Activated B cell treated with CpG ODN at 0.5 μM for 24 hours (primary cell): ENCODE measurements at regions of chr10 and their contacts with region 1.

Region 1: DNA sequence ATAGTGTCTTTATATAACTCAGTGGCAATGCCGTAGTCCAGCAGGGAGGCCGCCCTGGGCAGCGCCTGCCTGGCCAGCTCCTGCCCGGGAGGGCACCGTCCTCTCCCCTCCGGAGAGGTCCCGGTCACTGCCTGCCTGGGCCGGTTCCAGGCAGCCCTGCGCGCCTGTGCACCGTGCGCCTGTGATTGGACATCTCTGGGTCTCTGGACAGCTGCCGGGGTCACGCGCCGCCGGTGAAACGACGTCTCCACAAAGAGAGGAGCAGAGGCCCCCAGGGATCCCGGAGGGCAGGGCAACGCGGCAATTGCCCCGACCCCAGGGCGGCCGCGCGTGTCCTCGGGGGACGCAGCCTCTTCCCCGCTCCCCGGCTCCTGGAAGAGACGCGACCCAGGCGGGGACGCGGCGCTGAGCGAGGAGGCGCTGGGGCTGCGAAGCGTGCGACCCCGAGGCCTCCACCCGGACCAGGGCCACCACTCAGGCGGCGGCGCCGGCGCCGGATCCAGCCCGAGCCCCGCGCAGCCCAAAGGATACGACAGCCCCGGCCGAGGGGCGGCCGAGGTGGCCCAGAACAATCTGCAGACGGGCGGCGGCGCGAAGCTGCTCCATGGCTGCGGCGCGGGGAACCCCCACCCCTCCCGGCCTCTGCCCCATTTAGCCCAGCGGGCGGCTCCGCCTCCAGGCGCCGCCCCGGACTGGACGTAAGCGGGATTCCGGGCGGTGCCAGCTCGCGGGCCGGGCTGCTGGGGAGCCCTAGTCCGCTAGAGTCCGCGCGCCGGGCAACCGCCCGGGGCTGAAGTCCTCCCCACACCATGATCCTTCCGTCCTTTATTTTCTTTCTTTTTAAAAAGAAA is at the start of gene PHYH:
- DNase-seq: peak; percentile 83
- ATAC-seq: peak; percentile 69
- H3K4me3 Mint-ChIP-seq: peak within 1 kb of the TSS; percentile 87
- H3K27ac Mint-ChIP-seq: peak within 1 kb of the TSS; percentile 82
- H3K4me1 Mint-ChIP-seq: peaks cover 27% of the 10 kb centered on the region
- H3K27me3 Mint-ChIP-seq: no peaks in the 10 kb centered on the region
- CTCF ChIP-seq: no peak
- total RNA-seq, gene PHYH: 10.4 and 10.8 TPM in 2 replicates

Region 2: GRCh38 chr10:12241810-12242529 is 1057.7 kb before region 1 on chr10:
- CTCF ChIA-PET with region 1: no interaction called
- POLR2A ChIA-PET with region 1: no interaction called
- intact Hi-C with region 1: loop called (anchors 5 kb)
- DNase-seq: no peak
- ATAC-seq: no peak
- H3K4me3 Mint-ChIP-seq: peak overlapping the region; percentile 29
- H3K27ac Mint-ChIP-seq: peak overlapping the region; percentile 75
- H3K4me1 Mint-ChIP-seq: peaks cover 69% of the 10 kb centered on the region
- H3K27me3 Mint-ChIP-seq: no peaks in the 10 kb centered on the region
- CTCF ChIP-seq: no peak

Region 3: GRCh38 chr10:13160934-13161856 is 138.5 kb before region 1 on chr10 and contains the start of gene MCM10:
- CTCF ChIA-PET with region 1: interaction called, 32 read pairs
- POLR2A ChIA-PET with region 1: interaction called, 15 read pairs
- intact Hi-C with region 1: loop called (anchors 1 kb)
- DNase-seq: peak; percentile 88
- ATAC-seq: peak; percentile 100
- H3K4me3 Mint-ChIP-seq: peak within 1 kb of the TSS; percentile 89
- H3K27ac Mint-ChIP-seq: peak within 1 kb of the TSS; percentile 43
- H3K4me1 Mint-ChIP-seq: peaks cover 14% of the 10 kb centered on the region
- H3K27me3 Mint-ChIP-seq: no peaks in the 10 kb centered on the region
- CTCF ChIP-seq: peak; percentile 77
- total RNA-seq, gene MCM10: 3.7 and 4.6 TPM in 2 replicates

Region 4: GRCh38 chr10:13271552-13272163 is 28.0 kb before region 1 on chr10:
- CTCF ChIA-PET with region 1: interaction called, 6 read pairs
- POLR2A ChIA-PET with region 1: interaction called, 3 read pairs
- intact Hi-C with region 1: loop called (anchors 1 kb)
- DNase-seq: peak; percentile 28
- ATAC-seq: peak; percentile 65
- H3K4me3 Mint-ChIP-seq: peak overlapping the region; percentile 42
- H3K27ac Mint-ChIP-seq: peak overlapping the region; percentile 27
- H3K4me1 Mint-ChIP-seq: no peaks in the 10 kb centered on the region
- H3K27me3 Mint-ChIP-seq: no peaks in the 10 kb centered on the region
- CTCF ChIP-seq: no peak

Region 5: DNA sequence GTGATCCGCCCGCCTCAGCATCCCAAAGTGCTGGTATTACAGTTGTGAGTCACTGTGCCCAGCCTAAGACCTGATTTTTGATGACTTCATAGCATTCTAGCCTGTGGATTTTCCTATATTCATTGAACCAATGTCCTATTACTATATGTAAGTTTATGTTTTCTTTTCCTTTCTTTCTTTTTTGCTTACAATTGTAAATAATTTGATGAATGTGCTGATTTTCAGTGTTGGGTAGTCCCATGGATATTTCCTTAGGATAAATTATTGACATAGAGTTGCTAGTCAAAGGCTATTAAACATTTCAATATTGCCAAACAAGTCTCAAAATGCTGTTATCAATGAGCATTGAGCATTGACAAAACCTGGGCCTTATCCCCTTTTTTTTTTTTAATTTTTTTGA is 10.1 kb after region 1 on chr10:
- CTCF ChIA-PET with region 1: no interaction called
- POLR2A ChIA-PET with region 1: no interaction called
- intact Hi-C with region 1: no loop called
- DNase-seq: no peak
- ATAC-seq: no peak
- H3K4me3 Mint-ChIP-seq: no peak overlapping the region
- H3K27ac Mint-ChIP-seq: no peak overlapping the region
- H3K4me1 Mint-ChIP-seq: no peaks in the 10 kb centered on the region
- H3K27me3 Mint-ChIP-seq: no peaks in the 10 kb centered on the region
- CTCF ChIP-seq: no peak

Region 6: GRCh38 chr10:13390604-13391522 is 91.2 kb after region 1 on chr10:
- CTCF ChIA-PET with region 1: no interaction called
- POLR2A ChIA-PET with region 1: no interaction called
- intact Hi-C with region 1: no loop called
- DNase-seq: no peak
- ATAC-seq: peak; percentile 45
- H3K4me3 Mint-ChIP-seq: peak overlapping the region; percentile 70
- H3K27ac Mint-ChIP-seq: no peak overlapping the region
- H3K4me1 Mint-ChIP-seq: peaks cover 14% of the 10 kb centered on the region
- H3K27me3 Mint-ChIP-seq: peaks cover 13% of the 10 kb centered on the region
- CTCF ChIP-seq: no peak

Region 7: DNA sequence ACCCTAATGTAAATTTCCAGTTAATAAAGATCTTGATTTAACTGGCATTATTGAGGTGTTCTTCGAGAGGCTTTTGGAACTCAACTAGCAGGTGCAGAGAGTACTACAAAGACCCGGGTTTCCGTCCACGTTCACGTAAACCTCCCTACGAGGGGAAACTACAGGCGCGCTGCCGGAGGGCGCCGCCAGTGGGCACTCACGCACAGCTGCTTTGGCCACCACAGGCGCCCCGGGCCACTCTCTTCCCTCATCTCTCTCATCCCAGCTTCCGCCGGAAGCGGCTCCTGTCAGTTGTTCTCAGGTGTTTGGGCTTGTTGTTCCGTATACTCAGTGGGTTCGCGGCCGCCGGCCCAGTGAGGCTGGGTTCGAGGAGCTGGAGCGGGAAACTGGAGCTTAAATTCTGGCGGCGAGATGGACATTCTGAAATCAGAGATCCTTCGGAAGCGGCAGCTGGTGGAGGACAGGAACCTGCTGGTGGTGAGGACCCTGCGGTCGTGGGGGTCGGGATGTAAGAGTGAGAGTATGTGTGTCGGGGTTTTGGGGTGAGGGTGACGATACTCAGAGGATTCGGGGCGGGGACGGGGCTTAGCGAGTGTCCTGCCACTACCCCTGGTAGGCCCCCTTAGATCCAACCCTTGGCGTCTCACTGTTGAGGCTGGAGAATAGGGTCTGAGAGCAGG is 287.2 kb after region 1 on chr10 and contains the start of gene PRPF18:
- CTCF ChIA-PET with region 1: no interaction called
- POLR2A ChIA-PET with region 1: interaction called, 4 read pairs
- intact Hi-C with region 1: loop called (anchors 5 kb)
- DNase-seq: peak; percentile 93
- ATAC-seq: peak; percentile 100
- H3K4me3 Mint-ChIP-seq: peak within 1 kb of the TSS; percentile 100
- H3K27ac Mint-ChIP-seq: peak within 1 kb of the TSS; percentile 98
- H3K4me1 Mint-ChIP-seq: peaks cover 29% of the 10 kb centered on the region
- H3K27me3 Mint-ChIP-seq: peaks cover 19% of the 10 kb centered on the region
- CTCF ChIP-seq: peak; percentile 80
- total RNA-seq, gene PRPF18: 20.7 and 26.1 TPM in 2 replicates

Region 8: DNA sequence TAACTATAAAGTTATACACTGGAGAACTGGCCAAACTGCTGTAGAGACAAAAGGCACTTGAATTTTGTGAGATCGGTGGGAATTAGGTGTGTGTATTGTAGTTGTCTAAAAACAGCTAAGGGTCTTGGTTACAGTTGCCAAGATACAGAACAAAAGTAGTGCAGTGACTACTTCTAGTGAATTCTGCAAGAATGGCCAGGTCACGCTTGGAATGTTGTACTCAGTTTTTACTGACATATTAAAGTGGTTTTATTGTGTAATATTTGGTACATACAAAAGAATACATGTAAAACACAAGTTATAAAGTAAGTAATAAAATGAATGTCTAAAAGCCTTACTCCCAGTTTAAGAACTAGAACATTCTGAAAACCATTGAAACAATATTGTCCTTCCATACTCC is 329.5 kb after region 1 on chr10:
- CTCF ChIA-PET with region 1: no interaction called
- POLR2A ChIA-PET with region 1: no interaction called
- intact Hi-C with region 1: no loop called
- DNase-seq: no peak
- ATAC-seq: no peak
- H3K4me3 Mint-ChIP-seq: no peak overlapping the region
- H3K27ac Mint-ChIP-seq: no peak overlapping the region
- H3K4me1 Mint-ChIP-seq: peaks cover 11% of the 10 kb centered on the region
- H3K27me3 Mint-ChIP-seq: no peaks in the 10 kb centered on the region
- CTCF ChIP-seq: no peak

Region 9: GRCh38 chr10:13690281-13690825 is 390.7 kb after region 1 on chr10:
- CTCF ChIA-PET with region 1: no interaction called
- POLR2A ChIA-PET with region 1: no interaction called
- intact Hi-C with region 1: no loop called
- DNase-seq: no peak
- ATAC-seq: peak; percentile 82
- H3K4me3 Mint-ChIP-seq: no peak overlapping the region
- H3K27ac Mint-ChIP-seq: no peak overlapping the region
- H3K4me1 Mint-ChIP-seq: peaks cover 2% of the 10 kb centered on the region
- H3K27me3 Mint-ChIP-seq: no peaks in the 10 kb centered on the region
- CTCF ChIP-seq: no peak